ENCODE measurements at regions of chr10 and their contacts with region 1.

Region 1: DNA sequence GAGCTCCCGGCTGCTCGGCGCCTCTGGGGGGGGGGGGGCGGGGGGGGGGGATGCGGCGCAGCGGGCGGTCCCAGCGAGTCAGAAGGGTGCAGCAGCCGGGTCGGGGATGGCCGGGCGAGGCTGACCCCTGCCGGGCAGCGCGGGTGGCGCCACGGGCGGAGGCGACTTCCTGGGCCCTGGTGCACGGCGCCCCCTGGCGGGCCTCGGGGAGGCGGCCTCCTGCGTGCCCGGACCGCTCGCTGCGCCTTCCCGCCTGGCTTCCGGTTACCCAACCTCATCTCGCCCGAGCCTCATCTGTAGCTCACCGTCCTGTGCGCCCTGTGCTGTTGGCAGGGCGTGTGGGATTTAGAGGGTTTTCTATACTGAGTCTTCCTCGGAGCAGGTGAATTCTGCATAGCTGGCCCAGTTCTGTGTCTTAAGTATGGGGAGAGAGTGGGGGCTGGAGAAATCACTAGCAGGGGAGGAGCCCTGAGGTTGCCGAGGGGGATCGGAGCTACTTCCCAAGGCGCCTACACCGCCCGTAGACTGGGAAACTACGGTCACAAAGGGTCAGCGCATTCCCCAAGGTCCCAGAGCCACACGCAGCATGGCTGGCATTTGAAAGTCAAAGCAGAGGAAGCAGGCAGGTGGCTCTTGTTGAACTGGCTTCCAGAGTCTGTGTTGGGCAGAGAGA is 28.3 kb upstream of the WDFY4 start:
- DNase-seq: peak; percentile 78
- H3K4me3 ChIP-seq: peak overlapping the region; percentile 64
- H3K27ac ChIP-seq: peak overlapping the region; percentile 11
- H3K27me3 ChIP-seq: peaks cover 3% of the 10 kb centered on the region
- CTCF ChIP-seq: peak; percentile 83

Region 2: GRCh38 chr10:48309711-48310226 is 346.6 kb before region 1 on chr10:
- CTCF ChIA-PET with region 1: interaction called, 18 read pairs
- POLR2A ChIA-PET with region 1: interaction called, 3 read pairs
- DNase-seq: no peak
- H3K4me3 ChIP-seq: no peak overlapping the region
- H3K27ac ChIP-seq: no peak overlapping the region
- H3K27me3 ChIP-seq: no peaks in the 10 kb centered on the region
- CTCF ChIP-seq: 0 out of 2 replicates have a peak, but pooled peaks have one; percentile 9

Region 3: DNA sequence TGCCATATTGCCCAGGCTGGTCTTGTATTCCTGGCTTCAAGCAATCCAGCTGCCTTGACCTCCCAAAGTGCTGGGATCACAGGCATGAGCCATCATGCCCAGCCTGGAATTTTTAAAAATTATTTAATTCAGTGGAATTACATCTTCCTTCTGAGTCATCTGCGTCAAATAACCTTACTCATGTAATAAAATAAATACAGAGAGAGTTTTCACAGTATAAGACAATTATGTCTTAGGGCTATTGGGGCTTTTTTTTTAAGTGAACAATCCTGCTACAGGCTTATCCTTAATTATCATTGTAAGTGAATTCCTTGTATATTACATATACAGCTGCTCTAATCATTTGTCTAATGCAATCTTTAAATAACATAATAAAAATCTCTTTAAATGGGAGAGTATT is 241.6 kb before region 1 on chr10:
- CTCF ChIA-PET with region 1: interaction called, 10 read pairs
- POLR2A ChIA-PET with region 1: no interaction called
- DNase-seq: no peak
- H3K4me3 ChIP-seq: no peak overlapping the region
- H3K27ac ChIP-seq: peak overlapping the region; percentile 66
- H3K27me3 ChIP-seq: no peaks in the 10 kb centered on the region
- CTCF ChIP-seq: no peak

Region 4: GRCh38 chr10:48533951-48534720 is 122.2 kb before region 1 on chr10:
- CTCF ChIA-PET with region 1: interaction called, 65 read pairs
- POLR2A ChIA-PET with region 1: interaction called, 4 read pairs
- DNase-seq: no peak
- H3K4me3 ChIP-seq: no peak overlapping the region
- H3K27ac ChIP-seq: no peak overlapping the region
- H3K27me3 ChIP-seq: no peaks in the 10 kb centered on the region
- CTCF ChIP-seq: no peak

Region 5: DNA sequence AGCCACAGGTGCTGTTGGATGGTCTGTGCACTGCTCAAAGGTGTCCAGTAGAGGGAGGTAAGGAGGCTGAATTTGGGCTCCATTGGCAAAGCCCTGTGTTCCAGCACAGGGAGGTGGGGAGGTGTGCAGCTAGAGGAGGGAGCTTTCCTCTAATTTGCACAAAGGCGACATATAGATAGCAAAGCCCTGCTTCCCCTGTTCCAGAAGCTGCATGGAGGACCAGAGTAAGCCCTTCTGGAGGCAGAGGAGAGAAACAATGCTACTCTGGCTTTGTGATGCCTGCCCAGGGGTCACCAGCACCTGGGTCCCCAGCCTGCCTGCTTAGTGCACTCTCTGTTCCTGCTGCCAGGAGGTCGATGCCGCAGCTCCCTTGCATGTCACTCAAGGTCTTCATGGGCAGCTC is 48.1 kb before region 1 on chr10:
- CTCF ChIA-PET with region 1: interaction called, 104 read pairs
- POLR2A ChIA-PET with region 1: interaction called, 15 read pairs
- DNase-seq: no peak
- H3K4me3 ChIP-seq: no peak overlapping the region
- H3K27ac ChIP-seq: no peak overlapping the region
- H3K27me3 ChIP-seq: no peaks in the 10 kb centered on the region
- CTCF ChIP-seq: peak; percentile 75

Region 6: DNA sequence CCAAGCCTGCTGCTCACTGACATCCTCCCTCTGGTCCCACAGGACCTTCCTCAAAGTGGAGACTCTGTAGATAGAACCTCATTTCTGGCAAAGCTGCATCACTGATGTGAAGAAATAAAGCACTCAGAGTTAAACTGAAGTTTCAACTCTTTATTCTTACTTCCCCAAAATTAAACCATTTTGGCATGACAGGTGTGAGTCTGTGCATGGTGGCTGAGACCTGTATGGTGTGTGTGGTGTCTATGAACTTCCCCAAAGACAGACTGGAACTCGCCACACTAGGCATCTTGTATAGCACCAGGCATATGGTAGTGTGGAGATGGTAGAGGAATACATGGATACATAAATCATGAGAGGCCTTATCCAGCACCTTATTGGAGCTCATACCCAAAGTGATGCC is 21.7 kb after region 1 on chr10:
- CTCF ChIA-PET with region 1: interaction called, 16 read pairs
- POLR2A ChIA-PET with region 1: no interaction called
- DNase-seq: no peak
- H3K4me3 ChIP-seq: no peak overlapping the region
- H3K27ac ChIP-seq: no peak overlapping the region
- H3K27me3 ChIP-seq: peaks cover under 1% of the 10 kb centered on the region
- CTCF ChIP-seq: no peak

Region 7: DNA sequence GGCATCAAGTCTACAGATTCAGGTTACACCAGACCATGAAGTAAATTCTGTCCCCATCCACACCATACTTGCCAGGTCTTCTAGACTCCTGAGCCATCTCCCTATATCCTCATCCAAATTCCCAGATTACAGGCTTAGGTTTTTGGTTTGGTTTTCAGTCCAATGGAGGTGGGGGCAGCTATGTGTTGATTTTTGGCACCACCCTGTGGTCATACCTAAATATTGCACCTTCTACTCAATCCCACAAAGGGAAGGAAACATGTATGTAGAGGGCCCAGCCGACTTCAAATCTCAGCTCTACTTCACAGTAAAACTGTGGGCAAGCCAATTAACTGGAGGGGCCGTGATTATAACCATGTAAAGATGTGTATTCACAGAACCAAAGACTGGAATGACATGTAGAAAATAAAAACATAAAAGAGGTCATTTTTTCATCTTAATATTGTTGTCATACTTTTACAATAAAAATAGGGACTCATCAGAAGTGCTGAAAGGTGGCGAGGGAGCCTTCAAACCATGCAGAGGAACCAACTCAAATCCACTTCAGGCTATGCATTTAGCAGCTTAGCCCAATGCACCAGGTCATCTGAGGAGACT is 862.7 kb after region 1 on chr10:
- CTCF ChIA-PET with region 1: interaction called, 127 read pairs
- POLR2A ChIA-PET with region 1: interaction called, 4 read pairs
- DNase-seq: no peak
- H3K4me3 ChIP-seq: no peak overlapping the region
- H3K27ac ChIP-seq: no peak overlapping the region
- H3K27me3 ChIP-seq: no peaks in the 10 kb centered on the region
- CTCF ChIP-seq: peak; percentile 73

Measured in AG04450 (cell line).